ENCODE measurements at regions of chrX and their contacts with region 1.

Region 1: DNA sequence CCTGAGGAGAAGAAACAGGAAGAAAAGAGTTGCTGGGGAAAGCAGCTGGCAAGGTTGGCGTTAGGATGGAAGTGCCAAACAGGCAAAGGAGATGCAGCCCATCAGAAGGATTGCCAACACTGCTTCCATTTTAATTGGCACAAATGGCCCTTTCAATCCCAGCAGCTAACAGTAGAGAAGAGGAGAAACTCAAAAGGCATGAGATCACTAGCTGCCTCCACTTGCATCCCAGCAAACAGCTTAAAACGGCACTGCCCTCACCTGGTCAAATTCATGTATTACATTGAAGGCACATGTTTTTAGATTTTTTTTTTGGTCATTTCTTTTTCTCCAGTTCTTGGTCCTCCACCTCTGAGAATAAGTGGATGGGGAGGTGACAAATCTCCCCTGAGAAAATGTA is 14.9 kb upstream of the LOC101059915 start:
- DNase-seq: peak; percentile 56
- H3K4me3 ChIP-seq: no peak overlapping the region
- H3K27ac ChIP-seq: no peak overlapping the region
- H3K4me1 ChIP-seq: no peaks in the 10 kb centered on the region
- H3K27me3 ChIP-seq: no peaks in the 10 kb centered on the region
- CTCF ChIP-seq: peak; percentile 40 to 43
- POLR2A ChIP-seq: no peak

Region 2: GRCh38 chrX:71171110-71171801 is 481.1 kb before region 1 on chrX:
- CTCF ChIA-PET with region 1: no interaction called
- POLR2A ChIA-PET with region 1: no interaction called
- dilution Hi-C with region 1: no loop called
- intact Hi-C with region 1: no loop called
- DNase-seq: no peak
- H3K4me3 ChIP-seq: no peak overlapping the region
- H3K27ac ChIP-seq: no peak overlapping the region
- H3K4me1 ChIP-seq: no peaks in the 10 kb centered on the region
- H3K27me3 ChIP-seq: no peaks in the 10 kb centered on the region
- CTCF ChIP-seq: no peak
- POLR2A ChIP-seq: no peak

Region 3: GRCh38 chrX:71573591-71573990 is 78.8 kb before region 1 on chrX:
- CTCF ChIA-PET with region 1: interaction called, 13 read pairs
- POLR2A ChIA-PET with region 1: no interaction called
- dilution Hi-C with region 1: no loop called
- intact Hi-C with region 1: loop called (anchors 2 kb)
- DNase-seq: no peak
- H3K4me3 ChIP-seq: no peak overlapping the region
- H3K27ac ChIP-seq: peak overlapping the region; percentile 7
- H3K4me1 ChIP-seq: peaks cover 9% of the 10 kb centered on the region
- H3K27me3 ChIP-seq: no peaks in the 10 kb centered on the region
- CTCF ChIP-seq: no peak
- POLR2A ChIP-seq: no peak

Region 4: GRCh38 chrX:71579136-71579989 is 73.0 kb before region 1 on chrX:
- CTCF ChIA-PET with region 1: interaction called, 13 read pairs
- POLR2A ChIA-PET with region 1: no interaction called
- dilution Hi-C with region 1: no loop called
- intact Hi-C with region 1: loop called (anchors 2 kb)
- DNase-seq: no peak
- H3K4me3 ChIP-seq: no peak overlapping the region
- H3K27ac ChIP-seq: no peak overlapping the region
- H3K4me1 ChIP-seq: no peaks in the 10 kb centered on the region
- H3K27me3 ChIP-seq: no peaks in the 10 kb centered on the region
- CTCF ChIP-seq: no peak
- POLR2A ChIP-seq: no peak

Region 5: GRCh38 chrX:71612256-71612655 is 40.1 kb before region 1 on chrX:
- CTCF ChIA-PET with region 1: interaction called, 3 read pairs
- POLR2A ChIA-PET with region 1: no interaction called
- dilution Hi-C with region 1: no loop called
- intact Hi-C with region 1: loop called (anchors 5 kb)
- DNase-seq: peak; percentile 85
- H3K4me3 ChIP-seq: no peak overlapping the region
- H3K27ac ChIP-seq: peak overlapping the region; percentile 78
- H3K4me1 ChIP-seq: peaks cover 10% of the 10 kb centered on the region
- H3K27me3 ChIP-seq: no peaks in the 10 kb centered on the region
- CTCF ChIP-seq: no peak
- POLR2A ChIP-seq: no peak

Region 6: GRCh38 chrX:71622576-71623450 is 29.6 kb before region 1 on chrX:
- CTCF ChIA-PET with region 1: interaction called, 16 read pairs
- POLR2A ChIA-PET with region 1: no interaction called
- dilution Hi-C with region 1: no loop called
- intact Hi-C with region 1: no loop called
- DNase-seq: peak; percentile 67
- H3K4me3 ChIP-seq: no peak overlapping the region
- H3K27ac ChIP-seq: peak overlapping the region; percentile 75
- H3K4me1 ChIP-seq: peaks cover 11% of the 10 kb centered on the region
- H3K27me3 ChIP-seq: no peaks in the 10 kb centered on the region
- CTCF ChIP-seq: peak; percentile 15 to 36
- POLR2A ChIP-seq: no peak

Region 7: DNA sequence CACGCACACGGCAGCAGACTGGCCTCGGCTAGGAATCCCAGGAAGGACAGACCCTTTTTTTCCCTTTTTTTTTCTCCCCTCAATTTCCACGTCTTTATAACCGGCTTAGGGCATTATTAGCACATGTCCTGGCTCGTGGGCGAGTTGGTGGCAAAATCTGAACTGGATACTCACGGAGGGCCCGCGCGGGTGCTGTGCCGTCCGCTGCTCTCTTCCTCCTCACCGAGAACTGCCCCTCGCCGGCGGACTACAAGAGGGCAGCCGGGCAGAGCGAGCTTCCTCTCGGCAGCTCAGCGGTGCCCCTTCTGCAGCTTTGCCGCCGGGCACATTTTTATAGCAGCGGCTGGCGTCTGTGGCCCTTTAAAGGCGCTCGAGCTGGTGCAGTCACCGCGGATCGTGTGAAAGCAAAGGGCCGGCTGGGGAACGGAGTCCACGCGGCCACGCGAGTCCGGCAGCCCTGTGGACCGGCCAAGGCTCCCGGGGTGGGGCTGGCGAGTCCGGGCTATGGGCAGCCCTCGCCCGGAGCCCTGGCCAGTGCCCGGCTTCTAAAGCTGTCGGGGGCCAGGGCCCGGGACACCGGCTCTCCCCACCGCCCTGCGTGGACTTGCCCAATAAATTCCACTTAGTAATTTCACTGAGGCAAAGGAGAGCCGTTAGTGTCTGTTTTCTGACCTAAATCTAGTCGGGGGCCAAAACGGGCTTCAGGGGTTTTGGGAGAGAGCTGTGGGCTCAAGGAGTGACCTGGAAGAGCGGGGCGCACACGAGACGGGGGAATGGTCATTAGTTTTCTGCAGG is 654.6 kb after region 1 on chrX:
- CTCF ChIA-PET with region 1: no interaction called
- POLR2A ChIA-PET with region 1: no interaction called
- dilution Hi-C with region 1: no loop called
- intact Hi-C with region 1: no loop called
- DNase-seq: peak; percentile 64
- H3K4me3 ChIP-seq: peak overlapping the region; percentile 20 to 43 (median 37)
- H3K27ac ChIP-seq: no peak overlapping the region
- H3K4me1 ChIP-seq: peaks cover 22% of the 10 kb centered on the region
- H3K27me3 ChIP-seq: peaks cover 44 to 62% of the 10 kb centered on the region in 2 experiments
- CTCF ChIP-seq: no peak
- POLR2A ChIP-seq: no peak